Common myeloid progenitor, CD34-positive (primary cell): ENCODE measurements at regions of chr19 and their contacts with region 1.

Region 1: DNA sequence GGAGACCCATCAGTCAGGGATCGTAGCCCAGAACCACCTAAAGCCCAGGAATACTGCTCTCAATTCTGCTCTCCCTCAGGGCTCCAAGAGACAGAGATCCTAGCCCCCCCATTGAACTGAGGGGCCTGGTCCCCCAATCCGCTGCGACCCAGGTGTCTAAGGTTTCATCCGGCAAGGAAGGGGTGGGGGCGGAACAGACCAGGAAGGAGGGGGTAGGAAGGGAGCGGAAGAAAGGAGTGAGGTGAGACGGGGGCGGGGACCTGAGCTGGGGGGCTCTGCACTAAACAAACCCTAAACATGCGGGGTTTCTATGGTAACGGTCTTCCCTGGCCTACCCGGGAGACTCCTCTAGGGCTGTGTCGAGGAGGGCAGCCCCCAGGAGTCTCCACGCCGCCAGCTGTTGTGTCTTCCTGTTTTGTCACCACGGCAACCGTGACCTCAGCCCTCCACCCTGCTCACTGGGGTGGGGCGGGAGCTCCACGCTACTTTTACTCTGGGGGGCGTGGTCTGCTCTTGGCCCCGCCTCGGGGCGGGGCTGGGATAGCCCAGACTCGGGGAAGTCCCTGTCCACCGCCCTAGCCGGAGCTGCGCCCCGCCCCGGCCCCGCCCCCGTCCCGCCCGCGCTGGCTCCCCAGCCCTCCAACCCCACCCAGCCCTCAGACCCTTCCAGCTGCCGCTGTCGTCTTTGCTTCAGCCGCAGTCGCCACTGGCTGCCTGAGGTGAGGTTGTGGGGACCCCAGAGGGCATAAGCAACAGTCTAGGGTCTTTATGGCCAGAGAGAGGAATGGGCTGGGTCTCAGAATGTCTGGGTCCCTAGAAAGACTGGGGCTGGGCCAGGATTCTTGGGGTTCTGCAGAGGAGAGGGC is at the start of gene MYADM:
- DNase-seq: peak; percentile 100
- H3K4me3 ChIP-seq: peak within 1 kb of the TSS; percentile 75 to 100 (median 96)
- H3K27ac ChIP-seq: peak within 1 kb of the TSS; percentile 96 to 99
- H3K4me1 ChIP-seq: peaks cover 5 to 52% (median 41%) of the 10 kb centered on the region in 4 experiments
- H3K27me3 ChIP-seq: no peaks in the 10 kb centered on the region

Region 2: GRCh38 chr19:53881482-53882390 is 14.3 kb after region 1 on chr19 and contains the start of gene PRKCG:
- CTCF ChIA-PET with region 1: interaction called, 8 read pairs
- POLR2A ChIA-PET with region 1: interaction called, 13 read pairs
- DNase-seq: peak; percentile 68 to 76 (median 72)
- H3K4me3 ChIP-seq: peak within 1 kb of the TSS in 5 of 7 experiments; percentile 8 to 64 (median 19)
- H3K27ac ChIP-seq: no peak within 1 kb of the TSS
- H3K4me1 ChIP-seq: peaks cover 9 to 30% (median 26%) of the 10 kb centered on the region in 4 experiments
- H3K27me3 ChIP-seq: peaks cover 9 to 70% (median 36%) of the 10 kb centered on the region in 5 experiments